WTC11 (cell line): ENCODE measurements at regions of chr19 and their contacts with region 1.

Region 1: DNA sequence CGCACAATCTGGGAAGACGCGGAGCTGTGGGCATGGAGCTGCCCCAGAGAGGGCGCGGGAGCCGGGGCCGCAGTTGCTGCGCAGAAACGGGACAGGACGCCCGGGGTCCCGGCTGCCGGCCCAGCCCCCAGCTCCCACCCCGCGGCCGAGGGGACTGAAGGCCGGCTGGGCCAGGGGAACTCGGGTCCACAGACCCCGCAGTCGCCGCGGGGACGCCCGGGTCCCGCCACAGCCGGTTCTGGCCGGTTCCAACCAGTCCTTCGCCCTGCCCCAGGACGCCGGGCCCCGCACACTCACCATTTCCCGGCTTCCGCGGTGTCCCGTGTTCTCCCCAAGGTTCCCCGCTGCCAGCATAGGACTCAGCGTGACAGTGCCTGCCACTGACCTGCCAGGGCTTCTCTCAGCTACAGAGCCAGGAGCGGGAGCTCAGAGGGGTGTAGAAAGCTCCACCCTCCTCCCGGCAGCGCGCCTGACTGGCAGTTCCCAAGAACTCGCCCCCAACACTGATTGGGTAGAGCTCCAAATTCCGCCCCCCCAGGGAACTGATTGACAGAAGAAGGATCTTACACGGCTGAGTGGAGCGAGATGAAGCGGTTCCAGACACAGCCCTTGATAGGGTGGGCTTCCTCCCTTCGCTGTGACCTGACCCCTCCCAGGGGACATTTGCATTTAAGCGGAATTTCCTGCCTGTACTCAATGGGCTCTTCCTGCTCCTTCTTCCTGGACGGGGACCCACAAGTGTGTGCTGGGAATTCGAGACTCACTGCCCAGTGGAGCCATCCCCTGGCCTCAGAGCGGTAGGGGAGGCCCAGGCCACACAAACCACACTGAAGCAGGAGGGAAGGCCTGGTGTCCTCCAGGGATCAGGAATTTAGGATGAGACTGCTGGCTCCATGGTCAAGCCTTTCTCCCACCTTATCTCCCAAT is at the start of gene ZNF442:
- DNase-seq: peak; percentile 98
- ATAC-seq: peak; percentile 96
- H3K4me3 Mint-ChIP-seq: peak within 1 kb of the TSS; percentile 96
- H3K27ac Mint-ChIP-seq: peak within 1 kb of the TSS; percentile 95
- H3K4me1 Mint-ChIP-seq: peaks cover 8% of the 10 kb centered on the region
- H3K27me3 Mint-ChIP-seq: peaks cover 23% of the 10 kb centered on the region
- CTCF ChIP-seq: no peak
- total RNA-seq, gene ZNF442: 1.9 to 4.0 TPM (median 2.4 TPM) in 3 replicates

Region 2: DNA sequence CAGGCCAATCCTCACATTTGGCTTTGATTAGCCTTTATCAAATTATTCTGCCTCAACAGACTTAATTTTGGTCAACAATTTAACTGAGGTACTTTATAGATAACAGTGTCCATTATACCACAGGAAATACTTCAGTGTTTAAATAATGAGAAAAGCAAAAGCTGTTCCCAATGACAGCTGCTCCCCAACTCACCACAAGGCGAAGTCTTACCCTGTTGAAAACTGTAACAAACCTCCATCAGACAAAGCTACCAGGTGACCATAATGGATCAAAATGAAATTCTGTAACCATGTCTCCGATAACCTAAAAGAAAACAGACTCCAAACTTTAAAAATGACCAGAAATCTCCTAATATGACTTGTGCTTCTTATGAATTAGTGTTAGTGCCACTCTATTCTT is 121.1 kb before region 1 on chr19:
- CTCF ChIA-PET with region 1: interaction called, 12 read pairs
- POLR2A ChIA-PET with region 1: interaction called, 4 read pairs
- DNase-seq: no peak
- ATAC-seq: no peak
- H3K4me3 Mint-ChIP-seq: no peak overlapping the region
- H3K27ac Mint-ChIP-seq: no peak overlapping the region
- H3K4me1 Mint-ChIP-seq: no peaks in the 10 kb centered on the region
- H3K27me3 Mint-ChIP-seq: peaks cover 9% of the 10 kb centered on the region
- CTCF ChIP-seq: 0 out of 2 replicates have a peak, but pooled peaks have one; percentile 24

Region 3: GRCh38 chr19:12284226-12284625 is 81.3 kb before region 1 on chr19:
- CTCF ChIA-PET with region 1: no interaction called
- POLR2A ChIA-PET with region 1: no interaction called
- DNase-seq: no peak
- ATAC-seq: no peak
- H3K4me3 Mint-ChIP-seq: no peak overlapping the region
- H3K27ac Mint-ChIP-seq: no peak overlapping the region
- H3K4me1 Mint-ChIP-seq: 0 out of 2 replicates have a peak, but pooled peaks cover 2% of the 10 kb centered on the region
- H3K27me3 Mint-ChIP-seq: no peaks in the 10 kb centered on the region
- CTCF ChIP-seq: no peak

Region 4: GRCh38 chr19:12294249-12295158 is 71.0 kb before region 1 on chr19 and contains the start of gene ZNF44:
- CTCF ChIA-PET with region 1: interaction called, 6 read pairs
- POLR2A ChIA-PET with region 1: interaction called, 10 read pairs
- DNase-seq: peak; percentile 98
- ATAC-seq: peak; percentile 97
- H3K4me3 Mint-ChIP-seq: peak within 1 kb of the TSS; percentile 97
- H3K27ac Mint-ChIP-seq: peak within 1 kb of the TSS; percentile 97
- H3K4me1 Mint-ChIP-seq: peaks cover 24% of the 10 kb centered on the region
- H3K27me3 Mint-ChIP-seq: no peaks in the 10 kb centered on the region
- CTCF ChIP-seq: no peak
- total RNA-seq, gene ZNF44: 4.8 to 7.6 TPM (median 6.4 TPM) in 3 replicates

Region 5: GRCh38 chr19:12333162-12334159 is 32.0 kb before region 1 on chr19 and contains the start of gene ZNF563:
- CTCF ChIA-PET with region 1: interaction called, 10 read pairs
- POLR2A ChIA-PET with region 1: interaction called, 7 read pairs
- DNase-seq: peak; percentile 99
- ATAC-seq: peak; percentile 100
- H3K4me3 Mint-ChIP-seq: peak within 1 kb of the TSS; percentile 96
- H3K27ac Mint-ChIP-seq: peak within 1 kb of the TSS; percentile 96
- H3K4me1 Mint-ChIP-seq: peaks cover 25% of the 10 kb centered on the region
- H3K27me3 Mint-ChIP-seq: peaks cover 11% of the 10 kb centered on the region
- CTCF ChIP-seq: no peak
- total RNA-seq, gene ZNF563: 4.5 to 5.6 TPM (median 4.5 TPM) in 3 replicates

Region 6: DNA sequence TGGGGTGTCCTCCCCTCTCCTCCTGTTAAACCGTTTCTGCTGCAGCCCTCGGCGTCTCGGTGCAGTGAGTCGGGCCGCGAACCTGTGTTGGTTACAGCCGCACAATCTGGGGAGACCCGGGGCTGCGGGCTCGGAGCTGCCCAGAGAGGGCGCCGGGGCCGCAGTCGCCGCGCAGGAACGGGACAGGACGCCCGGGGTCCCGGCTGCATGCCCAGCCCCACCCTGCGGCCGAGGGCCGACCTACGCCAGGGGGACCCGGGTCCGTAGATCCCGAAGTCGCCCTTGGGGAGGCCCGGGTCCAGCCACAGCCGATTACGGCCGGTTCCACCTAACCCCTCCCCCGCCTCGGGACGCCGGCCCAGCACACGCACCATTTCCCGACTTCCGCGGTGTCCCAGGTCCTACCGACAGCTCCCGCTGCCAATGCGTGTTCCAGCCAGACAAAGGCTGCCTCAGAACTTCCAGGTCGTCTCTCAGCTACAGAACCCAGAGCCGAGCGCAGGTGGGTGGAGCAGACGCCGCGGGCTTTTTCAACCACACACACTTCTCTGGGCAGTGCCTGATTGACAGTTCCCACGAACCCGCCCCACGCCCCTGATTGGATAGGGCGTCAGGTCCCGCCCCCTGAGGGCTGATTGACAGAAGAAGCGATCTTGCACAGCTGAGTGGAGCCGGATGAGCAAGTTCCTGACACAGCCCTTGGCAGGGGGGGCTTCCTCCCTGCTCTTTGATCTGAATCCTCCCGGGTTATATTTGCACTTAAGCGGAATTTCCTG is 75.2 kb after region 1 on chr19 and contains the start of gene ZNF443:
- CTCF ChIA-PET with region 1: interaction called, 3 read pairs
- POLR2A ChIA-PET with region 1: interaction called, 10 read pairs
- DNase-seq: peak; percentile 100
- ATAC-seq: peak; percentile 96
- H3K4me3 Mint-ChIP-seq: peak within 1 kb of the TSS; percentile 99
- H3K27ac Mint-ChIP-seq: peak within 1 kb of the TSS; percentile 100
- H3K4me1 Mint-ChIP-seq: peaks cover 14% of the 10 kb centered on the region
- H3K27me3 Mint-ChIP-seq: no peaks in the 10 kb centered on the region; the same call in 1 of the 2 replicates
- CTCF ChIP-seq: no peak
- total RNA-seq, gene ZNF443: 7.0 to 8.0 TPM (median 7.1 TPM) in 3 replicates

Region 7: GRCh38 chr19:12495002-12495802 is 129.7 kb after region 1 on chr19:
- CTCF ChIA-PET with region 1: interaction called, 10 read pairs
- POLR2A ChIA-PET with region 1: interaction called, 5 read pairs
- DNase-seq: peak; percentile 94
- ATAC-seq: peak; percentile 99
- H3K4me3 Mint-ChIP-seq: peak overlapping the region; percentile 76
- H3K27ac Mint-ChIP-seq: peak overlapping the region; percentile 95
- H3K4me1 Mint-ChIP-seq: peaks cover 7% of the 10 kb centered on the region
- H3K27me3 Mint-ChIP-seq: peaks cover 7% of the 10 kb centered on the region
- CTCF ChIP-seq: no peak